Activated naive CD4-positive, alpha-beta T cell treated with anti-CD3 and anti-CD28 coated beads, Interleukin-2, amount 10 ng/mL, durations not matched to agents 7 days and 5 days (primary cell): ENCODE measurements at regions of chr6 and their contacts with region 1.

Region 1: GRCh38 chr6:134640975-134641429 is 308.9 kb downstream of the ALDH8A1 start:
- DNase-seq: peak; percentile 83
- H3K4me3 Mint-ChIP-seq: no peak overlapping the region
- H3K27ac Mint-ChIP-seq: no peak overlapping the region
- H3K4me1 Mint-ChIP-seq: peaks cover 19% of the 10 kb centered on the region
- H3K27me3 Mint-ChIP-seq: peaks cover 11% of the 10 kb centered on the region

Region 2: GRCh38 chr6:134174672-134175198 is 466.3 kb before region 1 on chr6:
- CTCF ChIA-PET with region 1: interaction called, 17 read pairs
- DNase-seq: peak; percentile 93
- H3K4me3 Mint-ChIP-seq: peak overlapping the region; percentile 99
- H3K27ac Mint-ChIP-seq: peak overlapping the region; percentile 98
- H3K4me1 Mint-ChIP-seq: peaks cover 79% of the 10 kb centered on the region
- H3K27me3 Mint-ChIP-seq: peaks cover 3% of the 10 kb centered on the region

Region 3: DNA sequence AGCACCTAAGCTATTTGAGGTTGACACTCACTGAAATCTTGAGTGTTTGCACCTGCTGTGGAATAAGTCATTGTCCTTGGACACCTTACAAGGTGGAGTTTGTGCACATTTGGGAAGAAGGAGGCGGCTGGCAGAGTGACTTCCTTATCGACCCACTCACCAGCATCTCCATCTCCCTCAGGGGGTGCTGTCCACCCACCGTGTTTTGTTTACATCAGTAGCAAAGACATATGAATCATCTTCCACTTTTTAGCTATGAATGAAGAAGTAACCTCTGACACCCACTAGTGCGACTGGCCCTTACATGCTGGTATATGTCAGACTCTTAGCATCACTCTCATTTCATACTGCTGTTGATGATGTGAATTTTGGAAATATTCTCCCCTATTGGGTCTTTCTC is 203.6 kb before region 1 on chr6:
- CTCF ChIA-PET with region 1: interaction called, 18 read pairs
- DNase-seq: peak; percentile 27
- H3K4me3 Mint-ChIP-seq: no peak overlapping the region
- H3K27ac Mint-ChIP-seq: peak overlapping the region; percentile 89
- H3K4me1 Mint-ChIP-seq: peaks cover 36% of the 10 kb centered on the region
- H3K27me3 Mint-ChIP-seq: no peaks in the 10 kb centered on the region

Region 4: DNA sequence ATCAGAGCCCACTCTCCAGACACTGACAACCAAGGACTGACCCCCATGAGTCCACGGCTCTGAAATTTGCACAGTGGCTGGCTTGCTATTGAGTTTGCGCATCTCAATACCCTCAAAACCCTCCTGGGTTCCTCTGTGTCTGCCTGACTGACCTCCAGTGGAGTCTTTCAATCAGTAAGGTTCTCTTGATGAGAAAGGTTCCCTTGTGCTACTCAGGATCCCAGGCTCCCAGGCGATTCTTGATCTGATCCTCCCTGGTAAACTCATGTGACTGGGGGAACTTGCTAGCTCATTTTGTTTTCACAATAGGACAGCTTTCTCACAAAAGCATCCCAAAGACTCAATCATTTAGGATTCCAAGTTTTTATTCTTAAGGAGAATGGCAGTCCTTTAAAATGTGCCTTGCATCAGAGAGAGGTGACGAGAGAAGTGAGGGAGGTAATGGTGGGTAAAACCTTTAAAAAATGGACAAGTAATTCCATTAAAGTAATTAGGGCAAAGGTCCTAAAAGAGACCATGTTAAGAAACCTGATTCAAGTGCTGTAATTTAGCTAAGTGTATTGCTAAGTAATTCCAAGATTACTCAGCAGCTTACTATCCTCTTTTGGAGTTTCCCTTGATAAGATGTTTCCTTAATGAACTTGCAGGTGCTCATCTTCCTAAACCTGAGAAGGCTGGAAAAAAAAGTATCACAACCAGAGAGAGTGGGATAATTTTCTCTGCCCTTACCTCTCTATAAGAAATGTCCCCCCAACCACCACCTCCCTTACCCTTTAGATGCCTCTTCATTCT is 18.4 kb before region 1 on chr6:
- CTCF ChIA-PET with region 1: interaction called, 11 read pairs
- DNase-seq: no peak
- H3K4me3 Mint-ChIP-seq: no peak overlapping the region
- H3K27ac Mint-ChIP-seq: no peak overlapping the region
- H3K4me1 Mint-ChIP-seq: peaks cover 4% of the 10 kb centered on the region
- H3K27me3 Mint-ChIP-seq: peaks cover 25% of the 10 kb centered on the region

Region 5: DNA sequence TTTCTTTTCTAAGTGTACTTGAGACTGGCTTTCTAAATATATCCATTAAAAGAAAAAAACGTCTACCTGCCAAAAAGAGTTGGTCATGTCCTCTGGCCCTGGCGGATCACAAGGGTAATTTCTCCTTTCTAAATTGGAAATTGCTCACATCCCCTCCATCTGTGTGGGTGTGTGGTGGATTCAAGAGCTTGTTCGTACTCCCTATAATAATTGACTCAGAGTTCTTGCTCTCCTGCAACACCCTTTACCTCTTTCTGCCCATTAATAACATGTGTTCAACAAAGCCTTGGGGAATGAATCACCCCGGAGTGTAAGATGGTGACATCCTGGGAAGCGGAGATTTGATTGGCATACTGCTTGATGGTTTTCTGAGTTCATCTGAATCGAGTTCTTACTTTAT is 45.1 kb after region 1 on chr6:
- CTCF ChIA-PET with region 1: no interaction called
- DNase-seq: no peak
- H3K4me3 Mint-ChIP-seq: no peak overlapping the region
- H3K27ac Mint-ChIP-seq: no peak overlapping the region
- H3K4me1 Mint-ChIP-seq: no peaks in the 10 kb centered on the region
- H3K27me3 Mint-ChIP-seq: peaks cover 18% of the 10 kb centered on the region